Activated CD8-positive, alpha-beta T cell treated with anti-CD3 and anti-CD28 coated beads for 36 hours (primary cell): ENCODE measurements at regions of chr17 and their contacts with region 1.

Region 1: GRCh38 chr17:55735731-55736405 is 13.2 kb upstream of the TMEM100 start:
- DNase-seq: peak; percentile 51
- ATAC-seq: no peak
- H3K4me3 Mint-ChIP-seq: no peak overlapping the region
- H3K27ac Mint-ChIP-seq: no peak overlapping the region
- H3K4me1 Mint-ChIP-seq: peaks cover 31% of the 10 kb centered on the region
- H3K27me3 Mint-ChIP-seq: peaks cover 23% of the 10 kb centered on the region
- CTCF ChIP-seq: peak; percentile 81

Region 2: DNA sequence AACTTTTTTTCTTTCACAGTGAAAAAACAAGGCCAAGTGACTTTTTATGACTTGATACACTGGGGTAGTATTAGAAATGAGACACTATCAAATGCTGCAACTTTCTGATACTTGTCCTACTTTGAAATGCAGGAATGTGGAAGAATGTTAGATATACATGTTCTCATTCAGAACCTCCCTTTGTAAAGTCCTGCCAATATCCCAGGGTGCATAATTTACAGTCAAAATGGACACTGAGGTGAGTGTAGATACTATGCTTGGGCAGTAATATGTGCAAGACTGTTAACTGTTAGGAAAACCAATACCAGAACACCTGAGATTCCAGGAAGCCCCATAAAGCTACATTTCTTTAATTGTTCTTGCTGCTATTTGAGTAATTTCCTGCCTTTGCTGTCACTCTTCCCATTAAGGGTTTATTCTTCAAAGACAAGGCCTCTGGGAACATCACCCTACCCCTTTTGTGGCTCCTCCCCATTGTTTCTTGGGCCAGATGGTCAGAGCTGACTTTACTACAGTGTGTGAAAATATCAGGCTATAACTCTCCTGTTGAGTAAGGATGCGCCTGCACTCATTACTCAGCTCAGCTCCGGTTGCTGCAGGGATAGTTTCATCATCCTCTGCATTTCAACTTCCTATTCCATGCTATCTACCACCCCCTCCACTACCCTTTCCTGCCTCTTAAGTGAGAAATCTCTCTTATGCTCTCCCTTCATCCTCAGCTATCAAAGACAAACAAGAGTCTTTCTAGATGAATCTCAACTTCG is 61.9 kb before region 1 on chr17:
- CTCF ChIA-PET with region 1: no interaction called
- POLR2A ChIA-PET with region 1: no interaction called
- intact Hi-C with region 1: no loop called
- DNase-seq: no peak
- ATAC-seq: no peak
- H3K4me3 Mint-ChIP-seq: no peak overlapping the region
- H3K27ac Mint-ChIP-seq: no peak overlapping the region
- H3K4me1 Mint-ChIP-seq: peaks cover 4% of the 10 kb centered on the region
- H3K27me3 Mint-ChIP-seq: peaks cover 30% of the 10 kb centered on the region
- CTCF ChIP-seq: no peak

Region 3: GRCh38 chr17:55750750-55751657 is 15.1 kb after region 1 on chr17 and contains the start of gene PCTP:
- CTCF ChIA-PET with region 1: interaction called, 25 read pairs
- POLR2A ChIA-PET with region 1: interaction called, 3 read pairs
- intact Hi-C with region 1: no loop called
- DNase-seq: peak; percentile 90
- ATAC-seq: peak; percentile 99
- H3K4me3 Mint-ChIP-seq: peak within 1 kb of the TSS; percentile 80
- H3K27ac Mint-ChIP-seq: peak within 1 kb of the TSS; percentile 27
- H3K4me1 Mint-ChIP-seq: peaks cover 13% of the 10 kb centered on the region
- H3K27me3 Mint-ChIP-seq: peaks cover 14% of the 10 kb centered on the region
- CTCF ChIP-seq: peak; percentile 59
- total RNA-seq, gene PCTP: 6.6 to 7.7 TPM